ENCODE measurements at regions of chr19 and their contacts with region 1.

Region 1: GRCh38 chr19:58021541-58022282 is 12.1 kb upstream of the ZSCAN1 start:
- DNase-seq: peak; percentile 38 to 42
- H3K4me3 ChIP-seq: peak overlapping the region in 1 of 3 donors; percentile 31
- H3K27ac ChIP-seq: no peak overlapping the region
- H3K4me1 ChIP-seq: no peaks in the 10 kb centered on the region
- H3K27me3 ChIP-seq: peaks cover 0 to 3% of the 10 kb centered on the region in 2 donors
- CTCF ChIP-seq: peak; percentile 60 to 71 (median 64)
- POLR2A ChIP-seq: no peak

Region 2: DNA sequence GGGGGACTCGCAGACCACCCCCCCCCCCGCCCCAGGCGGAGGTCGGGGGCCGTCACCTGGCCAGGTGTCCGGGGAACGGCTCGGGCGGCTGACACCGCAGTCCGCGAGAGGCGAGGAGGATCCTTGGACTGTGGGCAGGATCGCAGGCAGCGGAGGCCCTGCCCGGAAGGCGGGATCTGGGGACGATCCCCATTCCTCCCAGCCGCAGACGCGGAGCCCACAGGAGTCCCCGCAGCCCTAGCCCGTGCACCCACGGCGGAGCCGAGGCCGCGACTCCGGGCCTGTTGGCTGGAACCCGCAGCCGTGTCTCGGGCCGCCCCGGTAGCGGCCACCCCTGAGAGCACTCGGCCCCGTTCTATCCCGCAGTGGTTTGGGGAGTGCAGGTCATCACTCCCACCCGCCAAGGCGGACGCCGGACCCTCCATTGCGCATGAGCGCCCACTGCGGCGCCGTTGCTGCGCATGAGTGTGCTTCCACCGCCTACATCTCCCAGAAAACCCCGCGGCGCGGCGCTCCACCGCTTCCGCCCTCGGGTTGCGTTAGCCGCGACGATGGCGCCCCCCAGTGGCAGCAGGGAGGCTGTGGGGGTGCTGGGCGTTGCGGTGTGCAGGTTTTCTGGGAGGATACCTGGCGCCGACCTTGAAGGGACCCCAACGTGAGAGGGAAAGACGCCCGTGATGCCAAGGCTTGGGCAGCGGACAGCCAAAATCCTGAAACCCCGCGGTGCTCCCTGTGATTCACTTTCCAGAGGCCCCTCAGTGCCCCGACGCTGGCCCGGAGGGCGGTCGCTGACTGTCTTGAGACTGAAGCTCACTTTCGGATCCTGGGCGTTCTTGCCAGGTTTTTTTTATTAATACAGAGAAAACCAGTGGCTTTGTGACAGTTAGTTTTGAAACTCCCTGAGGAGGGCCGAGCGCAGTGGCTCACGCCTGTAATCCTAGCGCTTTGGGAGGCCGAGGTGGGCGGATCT is 133.3 kb after region 1 on chr19:
- intact Hi-C with region 1: loop called (anchors 10 kb)
- DNase-seq: peak; percentile 93 to 98
- H3K4me3 ChIP-seq: peak overlapping the region; percentile 70 to 93 (median 89)
- H3K27ac ChIP-seq: peak overlapping the region; percentile 90 to 98
- H3K4me1 ChIP-seq: peaks cover 0 to 13% of the 10 kb centered on the region in 2 donors
- H3K27me3 ChIP-seq: no peaks in the 10 kb centered on the region
- CTCF ChIP-seq: peak; percentile 96 to 99 (median 99)
- POLR2A ChIP-seq: no peak

Measured in breast epithelium (tissue), 4 donors.